CD4-positive, alpha-beta T cell (primary cell): ENCODE measurements at regions of chr2 and their contacts with region 1.

Region 1: GRCh38 chr2:71331581-71332434 is at the start of gene ZNF638:
- DNase-seq: peak; percentile 83 to 98 (median 92)
- ATAC-seq: peak; percentile 97
- H3K4me3 ChIP-seq: peak within 1 kb of the TSS; percentile 98
- H3K4me3 Mint-ChIP-seq: peak within 1 kb of the TSS; percentile 100
- H3K27ac ChIP-seq: peak within 1 kb of the TSS; percentile 82 to 94
- H3K27ac Mint-ChIP-seq: peak within 1 kb of the TSS; percentile 99
- H3K4me1 ChIP-seq: peaks cover 27% of the 10 kb centered on the region
- H3K4me1 Mint-ChIP-seq: peaks cover 55% of the 10 kb centered on the region
- H3K27me3 ChIP-seq: no peaks in the 10 kb centered on the region
- H3K27me3 Mint-ChIP-seq: peaks cover 11% of the 10 kb centered on the region
- CTCF ChIP-seq: peak; percentile 80
- total RNA-seq, gene ZNF638: 77.8 to 86.4 TPM

Region 2: GRCh38 chr2:70907130-70908057 is 424.4 kb before region 1 on chr2:
- CTCF ChIA-PET with region 1: no interaction called
- POLR2A ChIA-PET with region 1: no interaction called
- intact Hi-C with region 1: no loop called
- DNase-seq: peak in 1 of 14 experiments; percentile 35
- ATAC-seq: no peak
- H3K4me3 ChIP-seq: no peak overlapping the region
- H3K4me3 Mint-ChIP-seq: peak overlapping the region; percentile 54
- H3K27ac ChIP-seq: no peak overlapping the region
- H3K27ac Mint-ChIP-seq: no peak overlapping the region
- H3K4me1 ChIP-seq: peaks cover 15% of the 10 kb centered on the region
- H3K4me1 Mint-ChIP-seq: peaks cover 14% of the 10 kb centered on the region
- H3K27me3 ChIP-seq: peaks cover 66 to 88% of the 10 kb centered on the region in 2 experiments
- H3K27me3 Mint-ChIP-seq: peaks cover 88% of the 10 kb centered on the region
- CTCF ChIP-seq: no peak

Region 3: GRCh38 chr2:71068218-71069035 is 263.4 kb before region 1 on chr2 and contains the start of gene NAGK:
- CTCF ChIA-PET with region 1: no interaction called
- POLR2A ChIA-PET with region 1: interaction called, 11 read pairs
- intact Hi-C with region 1: loop called in 1 of 2 experiments (anchors 5 kb)
- DNase-seq: peak; percentile 94 to 99 (median 97)
- ATAC-seq: peak; percentile 78
- H3K4me3 ChIP-seq: peak within 1 kb of the TSS; percentile 97
- H3K4me3 Mint-ChIP-seq: peak within 1 kb of the TSS; percentile 99
- H3K27ac ChIP-seq: peak within 1 kb of the TSS; percentile 91 to 98
- H3K27ac Mint-ChIP-seq: peak within 1 kb of the TSS; percentile 99
- H3K4me1 ChIP-seq: peaks cover 56% of the 10 kb centered on the region
- H3K4me1 Mint-ChIP-seq: peaks cover 68% of the 10 kb centered on the region
- H3K27me3 ChIP-seq: no peaks in the 10 kb centered on the region
- H3K27me3 Mint-ChIP-seq: no peaks in the 10 kb centered on the region
- CTCF ChIP-seq: no peak
- total RNA-seq, gene NAGK: 62.3 to 73.3 TPM

Region 4: GRCh38 chr2:71226965-71227560 is 104.7 kb before region 1 on chr2 and contains the start of gene PAIP2B:
- CTCF ChIA-PET with region 1: interaction called, 14 read pairs
- POLR2A ChIA-PET with region 1: interaction called, 49 read pairs
- intact Hi-C with region 1: loop called in 1 of 2 experiments (anchors 2 kb)
- DNase-seq: peak; percentile 96 to 99 (median 98)
- ATAC-seq: peak; percentile 89
- H3K4me3 ChIP-seq: peak within 1 kb of the TSS; percentile 70
- H3K4me3 Mint-ChIP-seq: peak within 1 kb of the TSS; percentile 90
- H3K27ac ChIP-seq: peak within 1 kb of the TSS; percentile 42 to 64
- H3K27ac Mint-ChIP-seq: peak within 1 kb of the TSS; percentile 84
- H3K4me1 ChIP-seq: peaks cover 15% of the 10 kb centered on the region
- H3K4me1 Mint-ChIP-seq: peaks cover 28% of the 10 kb centered on the region
- H3K27me3 ChIP-seq: no peaks in the 10 kb centered on the region
- H3K27me3 Mint-ChIP-seq: peaks cover 12% of the 10 kb centered on the region
- CTCF ChIP-seq: no peak
- total RNA-seq, gene PAIP2B: 2.3 to 2.5 TPM

Region 5: DNA sequence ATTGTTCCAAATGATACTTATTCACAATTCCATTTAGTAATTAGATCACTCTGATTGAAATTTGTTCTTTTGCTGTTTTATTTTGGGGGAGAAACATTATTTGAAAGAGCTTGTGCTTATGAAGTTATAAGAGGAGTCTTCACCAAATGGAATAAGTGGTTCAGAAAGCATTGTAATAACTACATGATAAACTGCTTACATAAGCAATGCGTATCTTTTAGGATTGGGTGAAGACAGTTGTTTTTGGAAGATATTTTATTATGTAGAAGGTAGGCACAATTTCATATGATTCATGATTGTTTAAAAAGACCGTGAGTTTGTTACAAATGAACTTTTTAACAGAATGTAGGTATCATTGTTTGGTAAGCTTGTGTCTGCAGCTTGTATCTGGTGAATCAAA is 14.3 kb after region 1 on chr2:
- CTCF ChIA-PET with region 1: interaction called, 4 read pairs
- POLR2A ChIA-PET with region 1: interaction called, 27 read pairs
- intact Hi-C with region 1: no loop called
- DNase-seq: no peak
- ATAC-seq: no peak
- H3K4me3 ChIP-seq: no peak overlapping the region
- H3K4me3 Mint-ChIP-seq: no peak overlapping the region
- H3K27ac ChIP-seq: no peak overlapping the region
- H3K27ac Mint-ChIP-seq: no peak overlapping the region
- H3K4me1 ChIP-seq: no peaks in the 10 kb centered on the region
- H3K4me1 Mint-ChIP-seq: peaks cover 79% of the 10 kb centered on the region
- H3K27me3 ChIP-seq: no peaks in the 10 kb centered on the region
- H3K27me3 Mint-ChIP-seq: no peaks in the 10 kb centered on the region
- CTCF ChIP-seq: no peak

Region 6: GRCh38 chr2:71417300-71418202 is 85.7 kb after region 1 on chr2:
- CTCF ChIA-PET with region 1: no interaction called
- POLR2A ChIA-PET with region 1: interaction called, 16 read pairs
- intact Hi-C with region 1: loop called in 1 of 2 experiments (anchors 5 kb)
- DNase-seq: peak in 3 of 14 experiments; percentile 34 to 51 (median 40)
- ATAC-seq: peak; percentile 71
- H3K4me3 ChIP-seq: peak overlapping the region; percentile 54
- H3K4me3 Mint-ChIP-seq: peak overlapping the region; percentile 91
- H3K27ac ChIP-seq: peak overlapping the region; percentile 61 to 85
- H3K27ac Mint-ChIP-seq: peak overlapping the region; percentile 96
- H3K4me1 ChIP-seq: no peaks in the 10 kb centered on the region
- H3K4me1 Mint-ChIP-seq: peaks cover 24% of the 10 kb centered on the region
- H3K27me3 ChIP-seq: no peaks in the 10 kb centered on the region
- H3K27me3 Mint-ChIP-seq: no peaks in the 10 kb centered on the region
- CTCF ChIP-seq: no peak